Head of caudate nucleus (tissue), 42 donors: ENCODE measurements at regions of chrX and their contacts with region 1.

Region 1: GRCh38 chrX:153763989-153764755 is at the start of gene PLXNB3:
- DNase-seq: peak; percentile 79 to 97 (median 91)

Region 2: DNA sequence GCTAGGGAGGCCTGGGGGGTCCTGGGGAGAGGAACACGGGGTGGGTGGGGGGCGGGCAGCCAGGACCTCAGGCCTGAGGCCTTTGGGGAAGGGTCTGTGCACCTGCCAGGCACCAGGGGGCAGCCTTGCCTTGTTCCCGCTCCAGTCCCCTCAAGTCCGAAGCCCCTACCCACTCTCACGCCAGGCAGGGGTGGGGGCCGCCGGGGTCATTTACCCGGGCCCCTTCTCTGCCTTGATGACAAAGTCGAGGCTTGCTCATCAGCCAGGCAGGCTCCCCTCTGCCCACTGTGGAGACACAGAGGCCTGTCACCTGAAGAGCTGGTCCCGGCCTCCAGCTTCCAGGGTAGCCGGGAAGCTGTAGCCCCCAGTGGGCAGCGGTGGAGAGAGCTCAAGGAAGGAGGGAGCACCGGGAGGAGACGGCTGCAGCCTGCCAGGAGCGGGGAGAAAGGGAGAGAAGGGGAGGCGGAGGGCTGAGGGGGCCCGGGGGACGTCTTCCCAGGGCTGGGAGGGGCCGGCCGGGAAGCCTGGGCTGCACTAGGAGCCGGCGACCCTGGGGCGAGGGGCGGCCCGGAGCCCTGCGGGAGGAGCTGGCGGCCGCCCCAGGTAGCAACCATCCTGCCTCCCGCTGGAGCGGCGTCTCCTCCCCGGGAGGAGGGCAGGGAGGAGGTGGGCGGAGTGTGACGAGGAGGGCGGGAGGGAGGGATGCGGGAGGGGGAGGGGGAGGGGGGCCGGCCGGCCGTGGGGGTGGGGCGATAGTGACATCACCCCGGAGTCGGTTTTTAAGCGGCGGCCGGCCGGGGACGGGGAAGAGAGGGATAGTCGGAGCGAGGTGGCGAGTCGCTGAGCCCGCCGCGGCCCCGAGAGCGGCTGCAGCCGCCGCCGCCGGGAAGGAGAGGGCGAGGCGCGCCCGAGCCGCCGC is 76.8 kb before region 1 on chrX and contains the start of gene SLC6A8:
- intact Hi-C with region 1: loop called (anchors 2 kb)
- DNase-seq: peak; percentile 54 to 92 (median 81)

Region 3: GRCh38 chrX:153947009-153947769 is 183.0 kb after region 1 on chrX:
- intact Hi-C with region 1: loop called (anchors 2 kb)
- DNase-seq: peak in 41 of 42 donors; percentile 35 to 85 (median 74)